ENCODE measurements at regions of chr16 and their contacts with region 1.

Region 1: GRCh38 chr16:81204798-81205680 is 33.5 kb upstream of the BCO1 start:
- DNase-seq: no peak
- ATAC-seq: peak; percentile 63
- H3K4me3 ChIP-seq: no peak overlapping the region
- H3K27ac ChIP-seq: no peak overlapping the region
- H3K4me1 ChIP-seq: no peaks in the 10 kb centered on the region
- H3K27me3 ChIP-seq: no peaks in the 10 kb centered on the region

Region 2: DNA sequence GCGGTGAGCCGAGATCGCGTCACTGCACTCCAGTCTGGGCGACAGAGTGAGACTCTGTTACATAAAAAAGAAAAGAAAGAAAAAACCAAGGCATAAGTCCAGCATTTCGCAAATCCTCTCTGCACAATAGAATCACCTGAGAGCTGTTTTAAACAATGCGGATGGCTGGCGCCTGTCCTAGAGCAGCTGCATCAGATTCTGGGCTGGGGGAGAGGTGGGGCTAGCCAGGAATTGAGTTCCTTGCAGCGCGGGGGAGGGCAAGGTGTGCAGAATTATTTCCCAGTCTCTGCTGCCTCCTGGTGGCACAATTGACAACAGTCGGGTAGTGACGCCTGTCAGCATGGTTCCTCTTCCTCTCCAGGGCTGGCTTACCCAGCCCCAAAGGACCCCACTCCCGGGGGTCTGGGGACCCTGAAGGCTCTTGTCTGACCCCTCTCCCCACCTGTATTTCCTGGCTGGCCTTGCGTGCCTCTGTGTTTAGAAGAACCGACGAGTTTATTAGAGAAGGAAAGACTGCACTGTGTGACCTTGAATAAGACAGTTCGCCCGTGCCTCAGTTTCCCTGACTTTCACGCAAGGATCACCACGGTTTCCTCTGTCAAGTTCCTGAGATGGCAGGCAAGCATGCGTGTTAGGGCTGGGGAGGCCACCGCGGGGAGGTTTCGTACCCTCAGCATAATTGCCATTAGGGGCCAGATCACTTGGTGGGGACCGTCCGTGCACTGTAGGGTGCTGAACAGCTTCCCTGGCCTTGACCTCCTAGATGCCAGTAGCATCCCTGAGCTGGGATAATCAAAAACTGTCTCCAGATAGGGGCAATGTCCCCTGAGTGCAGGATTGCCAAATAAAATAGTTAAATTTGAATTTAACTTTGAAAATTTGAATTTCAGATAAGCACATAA is 533.1 kb after region 1 on chr16:
- intact Hi-C with region 1: loop called (anchors 5 to 10 kb)
- DNase-seq: peak; percentile 85 to 86
- ATAC-seq: peak; percentile 88
- H3K4me3 ChIP-seq: no peak overlapping the region
- H3K27ac ChIP-seq: no peak overlapping the region
- H3K4me1 ChIP-seq: no peaks in the 10 kb centered on the region
- H3K27me3 ChIP-seq: no peaks in the 10 kb centered on the region